ENCODE measurements at regions of chr19 and their contacts with region 1.

Region 1: GRCh38 chr19:56080669-56081401 is 40.3 kb downstream of the ZNF787 start:
- DNase-seq: peak; percentile 84
- H3K4me3 Mint-ChIP-seq: peak overlapping the region; percentile 68
- H3K27ac Mint-ChIP-seq: no peak overlapping the region
- H3K4me1 Mint-ChIP-seq: peaks cover 10% of the 10 kb centered on the region
- H3K27me3 Mint-ChIP-seq: peaks cover 15% of the 10 kb centered on the region

Region 2: DNA sequence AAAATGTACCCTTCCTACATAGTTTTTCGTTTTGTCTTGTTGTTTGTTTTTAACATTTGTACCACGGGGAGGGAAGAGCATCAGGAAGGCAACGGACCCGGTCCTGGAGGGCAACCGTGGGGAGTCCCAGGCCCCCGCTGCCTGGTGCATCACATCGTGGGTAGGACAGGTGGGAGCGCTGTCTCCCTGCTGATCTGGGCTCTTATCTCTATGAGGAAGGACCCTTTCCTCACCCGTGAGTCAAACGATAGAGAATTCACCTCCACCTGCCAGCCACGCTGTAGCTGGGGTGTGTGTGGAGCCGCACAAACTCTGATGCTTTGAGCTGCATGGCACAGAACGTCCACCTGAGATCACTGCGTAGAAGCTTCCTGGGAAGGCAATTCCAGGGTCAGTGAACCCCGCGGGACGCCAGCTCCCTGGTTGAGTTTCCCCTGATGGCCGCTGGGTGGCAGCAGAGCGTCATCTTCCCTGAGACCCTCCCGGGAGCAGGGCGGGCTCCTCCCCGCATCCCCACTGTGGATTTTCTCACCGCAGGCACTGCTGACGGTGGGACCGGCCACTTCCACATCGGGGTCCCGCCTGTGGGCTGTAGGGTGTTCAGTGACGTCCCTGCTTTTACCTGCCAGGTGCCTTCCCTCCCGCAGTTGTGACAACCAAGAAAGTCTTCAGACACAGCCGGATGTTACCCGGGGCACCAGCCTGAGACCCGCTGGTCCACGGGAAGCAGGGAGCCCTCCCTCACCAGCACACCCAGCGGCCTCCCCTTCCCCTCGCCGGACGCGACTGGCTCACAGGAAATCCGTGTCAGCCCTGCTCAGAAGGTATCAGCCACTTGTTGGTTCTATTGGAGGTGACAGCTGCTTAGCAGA is 14.4 kb before region 1 on chr19:
- CTCF ChIA-PET with region 1: interaction called, 16 read pairs
- DNase-seq: peak; percentile 76
- H3K4me3 Mint-ChIP-seq: peak overlapping the region; percentile 59
- H3K27ac Mint-ChIP-seq: no peak overlapping the region
- H3K4me1 Mint-ChIP-seq: peaks cover 13% of the 10 kb centered on the region
- H3K27me3 Mint-ChIP-seq: peaks cover 19% of the 10 kb centered on the region

Region 3: DNA sequence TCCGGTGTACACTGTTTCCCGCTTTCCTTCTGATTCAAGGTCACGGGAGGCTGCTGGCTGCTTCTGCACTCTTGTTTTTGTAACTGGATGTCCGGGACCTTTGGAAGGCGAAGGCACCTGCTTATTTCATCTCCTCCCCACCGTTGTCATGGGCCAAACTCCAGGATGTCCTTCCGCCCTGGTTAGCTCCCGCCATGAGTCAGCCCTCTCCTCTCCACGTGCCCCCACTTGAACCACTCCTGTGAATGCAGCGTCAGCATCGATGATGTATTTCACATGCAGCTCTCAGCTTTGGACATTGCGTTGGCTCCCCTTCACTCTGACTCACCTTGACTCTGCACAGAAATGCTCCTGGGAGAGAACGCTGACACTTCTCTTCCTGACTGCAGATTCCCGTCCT is 89.4 kb after region 1 on chr19:
- CTCF ChIA-PET with region 1: interaction called, 20 read pairs
- DNase-seq: no peak
- H3K4me3 Mint-ChIP-seq: no peak overlapping the region
- H3K27ac Mint-ChIP-seq: no peak overlapping the region
- H3K4me1 Mint-ChIP-seq: no peaks in the 10 kb centered on the region
- H3K27me3 Mint-ChIP-seq: peaks cover 10% of the 10 kb centered on the region

Region 4: DNA sequence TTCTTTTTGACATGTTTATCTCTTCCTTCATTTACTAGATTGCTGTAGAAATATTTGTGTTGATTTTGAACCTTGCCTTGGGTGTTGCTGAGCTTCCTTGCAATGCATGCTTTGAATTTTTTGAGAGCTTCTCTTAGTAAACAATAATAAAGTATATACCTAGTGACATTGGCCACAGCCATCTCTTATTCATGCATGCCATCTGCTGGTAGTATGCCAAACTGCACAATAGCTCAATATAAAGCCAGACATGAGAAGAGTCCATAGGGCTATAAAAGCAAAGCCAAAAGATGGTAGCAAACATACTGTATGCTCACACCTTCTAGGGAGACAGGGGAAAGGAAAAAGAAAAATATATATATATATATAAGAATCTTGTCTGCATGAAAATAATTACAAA is 252.7 kb after region 1 on chr19:
- CTCF ChIA-PET with region 1: interaction called, 13 read pairs
- DNase-seq: peak; percentile 69
- H3K4me3 Mint-ChIP-seq: no peak overlapping the region
- H3K27ac Mint-ChIP-seq: no peak overlapping the region
- H3K4me1 Mint-ChIP-seq: no peaks in the 10 kb centered on the region
- H3K27me3 Mint-ChIP-seq: no peaks in the 10 kb centered on the region